ENCODE measurements at regions of chr1 and their contacts with region 1.

Region 1: GRCh38 chr1:110196917-110197765 is 13.0 kb upstream of the KCNC4 start:
- DNase-seq: no peak
- ATAC-seq: peak; percentile 98
- H3K4me3 ChIP-seq: no peak overlapping the region
- H3K27ac ChIP-seq: no peak overlapping the region
- H3K4me1 ChIP-seq: no peaks in the 10 kb centered on the region
- H3K27me3 ChIP-seq: peaks cover 0 to 2% of the 10 kb centered on the region in 2 experiments; a peak in 2 of 4 replicates
- CTCF ChIP-seq: peak; percentile 87 to 92 (median 91)
- EP300 ChIP-seq: no peak
- POLR2A ChIP-seq: no peak
- RAD21 ChIP-seq: peak; percentile 61

Region 2: GRCh38 chr1:109454497-109455133 is 742.5 kb before region 1 on chr1:
- CTCF ChIA-PET with region 1: no interaction called
- POLR2A ChIA-PET with region 1: no interaction called
- RAD21 ChIA-PET with region 1: no interaction called
- SMC1A ChIA-PET with region 1: no interaction called
- in situ Hi-C with region 1: no loop called
- intact Hi-C with region 1: no loop called
- DNase-seq: no peak
- ATAC-seq: no peak
- H3K4me3 ChIP-seq: no peak overlapping the region
- H3K27ac ChIP-seq: no peak overlapping the region
- H3K4me1 ChIP-seq: no peaks in the 10 kb centered on the region
- H3K27me3 ChIP-seq: no peaks in the 10 kb centered on the region
- CTCF ChIP-seq: no peak
- EP300 ChIP-seq: no peak
- POLR2A ChIP-seq: no peak
- RAD21 ChIP-seq: no peak

Region 3: DNA sequence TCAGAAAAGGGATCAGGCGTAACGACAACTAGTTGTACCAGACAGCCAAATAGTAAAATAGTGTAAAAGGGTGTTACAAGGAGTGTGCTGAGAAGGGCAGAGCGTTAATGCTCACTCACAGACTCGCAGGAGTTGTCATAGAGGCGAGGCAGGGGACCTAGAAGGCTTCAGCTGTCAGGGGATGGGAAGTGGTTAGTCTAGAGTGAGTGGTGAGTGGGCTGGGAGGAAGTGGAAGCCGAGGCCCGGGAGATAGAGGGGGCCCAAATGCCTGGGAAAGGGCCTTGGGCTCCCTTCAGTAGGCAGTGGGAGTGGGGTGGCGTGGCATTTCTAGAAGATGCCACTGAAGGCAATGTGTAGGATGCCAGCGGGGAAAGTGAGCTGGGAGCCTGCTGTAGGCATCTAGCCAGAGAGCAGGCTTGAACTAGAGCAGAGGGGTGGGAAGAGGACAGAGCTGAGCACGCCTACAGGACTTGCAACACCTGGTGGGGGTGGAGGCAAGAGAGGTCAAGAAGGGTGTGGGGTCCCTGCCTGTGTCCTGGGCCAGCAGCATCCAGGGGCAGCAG is 36.5 kb before region 1 on chr1:
- CTCF ChIA-PET with region 1: no interaction called
- POLR2A ChIA-PET with region 1: no interaction called
- RAD21 ChIA-PET with region 1: no interaction called
- SMC1A ChIA-PET with region 1: no interaction called
- in situ Hi-C with region 1: no loop called
- intact Hi-C with region 1: no loop called
- DNase-seq: no peak
- ATAC-seq: no peak
- H3K4me3 ChIP-seq: no peak overlapping the region
- H3K27ac ChIP-seq: no peak overlapping the region
- H3K4me1 ChIP-seq: no peaks in the 10 kb centered on the region
- H3K27me3 ChIP-seq: peaks cover 0 to 3% of the 10 kb centered on the region in 2 experiments; a peak in 3 of 4 replicates
- CTCF ChIP-seq: no peak
- EP300 ChIP-seq: no peak
- POLR2A ChIP-seq: no peak
- RAD21 ChIP-seq: no peak

Region 4: GRCh38 chr1:110300412-110301085 is 103.4 kb after region 1 on chr1:
- CTCF ChIA-PET with region 1: interaction called, 753 read pairs
- POLR2A ChIA-PET with region 1: no interaction called
- RAD21 ChIA-PET with region 1: interaction called, 3 read pairs
- SMC1A ChIA-PET with region 1: interaction called, 524 read pairs
- in situ Hi-C with region 1: loop called (anchors 5 kb)
- intact Hi-C with region 1: no loop called
- DNase-seq: no peak
- ATAC-seq: no peak
- H3K4me3 ChIP-seq: no peak overlapping the region
- H3K27ac ChIP-seq: no peak overlapping the region
- H3K4me1 ChIP-seq: no peaks in the 10 kb centered on the region
- H3K27me3 ChIP-seq: no peaks in the 10 kb centered on the region; a peak in 1 of 4 replicates
- CTCF ChIP-seq: no peak
- EP300 ChIP-seq: no peak
- POLR2A ChIP-seq: no peak
- RAD21 ChIP-seq: no peak

Region 5: GRCh38 chr1:110319332-110320152 is 122.4 kb after region 1 on chr1:
- CTCF ChIA-PET with region 1: interaction called, 753 read pairs
- POLR2A ChIA-PET with region 1: no interaction called
- RAD21 ChIA-PET with region 1: interaction called, 51 read pairs
- SMC1A ChIA-PET with region 1: interaction called, 524 read pairs
- in situ Hi-C with region 1: no loop called
- intact Hi-C with region 1: no loop called
- DNase-seq: no peak
- ATAC-seq: no peak
- H3K4me3 ChIP-seq: no peak overlapping the region
- H3K27ac ChIP-seq: no peak overlapping the region
- H3K4me1 ChIP-seq: no peaks in the 10 kb centered on the region
- H3K27me3 ChIP-seq: no peaks in the 10 kb centered on the region
- CTCF ChIP-seq: no peak
- EP300 ChIP-seq: no peak
- POLR2A ChIP-seq: no peak
- RAD21 ChIP-seq: no peak